Dorsolateral prefrontal cortex (tissue), 120 donors: ENCODE measurements at regions of chr3 and their contacts with region 1.

Region 1: DNA sequence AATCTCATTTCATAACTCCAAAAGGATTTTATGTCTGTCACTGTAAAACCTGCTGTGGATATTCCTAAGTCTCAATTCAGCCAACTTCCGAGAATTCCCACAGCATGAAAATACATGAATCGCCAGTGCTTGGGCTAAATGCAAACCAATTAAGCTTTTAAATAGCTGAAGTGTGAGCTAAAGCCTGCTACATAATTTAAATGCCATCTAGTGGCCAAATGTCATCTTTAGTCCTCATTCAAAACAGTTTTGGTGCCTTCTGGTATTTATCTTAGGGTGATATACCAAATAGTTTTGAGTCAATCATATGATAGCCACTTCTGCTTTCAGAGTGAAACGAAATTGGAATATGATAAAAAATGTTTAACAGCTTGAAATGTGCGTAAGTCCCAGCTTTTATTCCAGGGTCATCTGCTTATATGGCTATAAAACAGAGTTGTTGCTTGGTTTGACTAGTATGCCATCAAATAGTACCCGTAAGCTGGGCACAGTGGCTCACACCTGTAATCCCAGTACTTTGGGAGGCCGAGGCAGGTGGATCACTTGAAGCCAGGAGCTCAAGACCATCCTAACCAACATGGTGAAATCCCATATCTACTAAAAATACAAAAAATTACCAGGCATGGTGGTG is 41.8 kb upstream of the CCNL1 start:
- DNase-seq: no peak
- H3K4me3 ChIP-seq: peak overlapping the region in 15 of 59 donors; percentile 7 to 36 (median 15)
- H3K27ac ChIP-seq: no peak overlapping the region
- H3K27me3 ChIP-seq: no peaks in the 10 kb centered on the region
- CTCF ChIP-seq: peak; percentile 43 to 82 (median 66)

Region 2: GRCh38 chr3:157240408-157240807 is 38.6 kb after region 1 on chr3:
- intact Hi-C with region 1: loop called in 1 of 2 experiments (anchors 5 kb)
- DNase-seq: no peak
- H3K4me3 ChIP-seq: no peak overlapping the region
- H3K27ac ChIP-seq: no peak overlapping the region
- H3K27me3 ChIP-seq: no peaks in the 10 kb centered on the region
- CTCF ChIP-seq: no peak

Region 3: GRCh38 chr3:157354722-157355121 is 153.0 kb after region 1 on chr3:
- intact Hi-C with region 1: loop called in 1 of 2 experiments (anchors 10 kb)
- DNase-seq: no peak
- H3K4me3 ChIP-seq: no peak overlapping the region
- H3K27ac ChIP-seq: no peak overlapping the region
- H3K27me3 ChIP-seq: no peaks in the 10 kb centered on the region
- CTCF ChIP-seq: peak in 42 of 56 donors; percentile 13 to 57 (median 33)

Region 4: DNA sequence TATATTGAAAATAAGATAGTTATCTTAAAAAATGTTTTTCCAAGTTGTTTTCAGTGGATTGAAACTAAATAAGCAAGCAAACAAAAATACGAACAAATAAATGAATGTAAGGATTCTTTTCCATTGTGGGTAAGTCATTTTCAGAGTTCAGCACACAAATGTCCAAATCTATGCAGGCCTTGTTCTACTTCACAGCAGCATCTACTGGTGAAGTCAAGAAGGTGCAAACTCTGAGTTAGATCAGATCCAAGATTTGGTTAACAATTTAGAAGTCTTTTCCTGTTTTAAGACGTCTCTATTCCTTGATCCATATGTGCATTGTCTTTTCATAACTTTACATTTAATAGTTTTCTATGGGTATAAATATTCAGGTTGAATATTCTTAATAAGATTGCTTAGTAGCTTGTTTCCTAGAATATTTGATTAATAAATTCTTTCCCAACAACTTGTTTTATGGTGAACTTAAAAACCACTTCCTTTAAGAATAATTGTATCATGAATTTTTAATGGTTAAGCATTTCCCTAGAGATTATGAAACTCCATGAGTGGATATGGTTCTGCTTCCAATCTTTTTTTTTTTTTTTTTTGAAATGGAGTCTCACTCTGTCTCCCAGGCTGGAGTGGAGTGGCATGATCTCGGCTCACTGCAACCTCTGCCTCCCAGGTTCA is 245.4 kb after region 1 on chr3:
- intact Hi-C with region 1: loop called in 1 of 2 experiments (anchors 10 kb)
- DNase-seq: no peak
- H3K4me3 ChIP-seq: no peak overlapping the region
- H3K27ac ChIP-seq: no peak overlapping the region
- H3K27me3 ChIP-seq: no peaks in the 10 kb centered on the region
- CTCF ChIP-seq: peak in 54 of 56 donors; percentile 11 to 73 (median 50)

Region 5: DNA sequence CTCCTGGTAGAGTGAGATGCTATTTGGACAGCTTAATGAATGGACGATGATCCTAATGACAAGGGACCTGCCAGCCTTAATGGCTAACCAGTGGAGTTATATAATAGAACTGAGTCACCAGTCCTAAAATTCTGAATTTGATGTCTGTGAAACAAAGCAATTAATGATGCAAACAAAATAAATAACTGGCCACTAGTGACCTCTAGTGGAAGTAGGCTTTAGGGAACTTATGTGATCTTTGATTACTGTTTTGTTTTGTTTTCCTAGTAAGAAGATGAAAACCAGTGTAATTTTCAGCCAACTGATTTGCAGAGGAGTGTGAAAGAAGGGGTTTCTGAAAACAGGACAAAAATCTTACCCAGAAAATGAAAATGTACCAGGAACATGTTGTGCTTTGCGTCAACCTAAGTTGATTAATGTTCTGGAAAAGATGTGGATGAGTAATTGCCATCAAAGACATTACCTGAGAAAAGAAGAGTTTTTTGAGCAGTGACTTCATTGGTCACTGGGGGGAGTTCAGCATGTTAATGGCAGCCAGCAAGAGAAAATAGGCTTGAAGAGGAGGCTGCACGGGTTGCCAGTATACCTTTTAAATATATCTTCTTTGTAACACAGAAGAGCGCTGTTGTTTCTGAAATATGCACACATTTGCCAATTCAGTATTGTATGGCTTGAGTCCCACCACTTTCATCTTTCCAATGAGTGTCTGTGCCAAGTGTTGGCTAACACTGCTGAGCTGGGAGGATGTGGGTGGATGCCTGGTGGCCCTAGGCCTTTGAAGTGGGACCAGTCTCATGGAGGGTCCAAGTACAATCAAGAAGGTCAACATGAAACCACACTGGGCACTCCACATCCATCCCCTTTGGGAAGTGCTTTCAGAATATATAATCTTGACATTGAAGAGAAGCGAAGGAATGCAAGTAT is 292.1 kb after region 1 on chr3:
- intact Hi-C with region 1: loop called (anchors 1 to 5 kb)
- DNase-seq: peak in 1 of 10 donors; percentile 5
- H3K4me3 ChIP-seq: no peak overlapping the region
- H3K27ac ChIP-seq: no peak overlapping the region
- H3K27me3 ChIP-seq: peaks cover 0 to 5% (median 0%) of the 10 kb centered on the region in 45 donors
- CTCF ChIP-seq: peak; percentile 53 to 85 (median 71)